WTC11 (cell line): ENCODE measurements at regions of chr13 and their contacts with region 1.

Region 1: GRCh38 chr13:27960362-27961226 is 8.5 kb downstream of the CDX2 start:
- DNase-seq: peak; percentile 89
- ATAC-seq: peak; percentile 76
- H3K4me3 Mint-ChIP-seq: peak overlapping the region; percentile 56
- H3K27ac Mint-ChIP-seq: no peak overlapping the region
- H3K4me1 Mint-ChIP-seq: peaks cover 37% of the 10 kb centered on the region
- H3K27me3 Mint-ChIP-seq: peaks cover 100% of the 10 kb centered on the region
- CTCF ChIP-seq: peak; percentile 55

Region 2: DNA sequence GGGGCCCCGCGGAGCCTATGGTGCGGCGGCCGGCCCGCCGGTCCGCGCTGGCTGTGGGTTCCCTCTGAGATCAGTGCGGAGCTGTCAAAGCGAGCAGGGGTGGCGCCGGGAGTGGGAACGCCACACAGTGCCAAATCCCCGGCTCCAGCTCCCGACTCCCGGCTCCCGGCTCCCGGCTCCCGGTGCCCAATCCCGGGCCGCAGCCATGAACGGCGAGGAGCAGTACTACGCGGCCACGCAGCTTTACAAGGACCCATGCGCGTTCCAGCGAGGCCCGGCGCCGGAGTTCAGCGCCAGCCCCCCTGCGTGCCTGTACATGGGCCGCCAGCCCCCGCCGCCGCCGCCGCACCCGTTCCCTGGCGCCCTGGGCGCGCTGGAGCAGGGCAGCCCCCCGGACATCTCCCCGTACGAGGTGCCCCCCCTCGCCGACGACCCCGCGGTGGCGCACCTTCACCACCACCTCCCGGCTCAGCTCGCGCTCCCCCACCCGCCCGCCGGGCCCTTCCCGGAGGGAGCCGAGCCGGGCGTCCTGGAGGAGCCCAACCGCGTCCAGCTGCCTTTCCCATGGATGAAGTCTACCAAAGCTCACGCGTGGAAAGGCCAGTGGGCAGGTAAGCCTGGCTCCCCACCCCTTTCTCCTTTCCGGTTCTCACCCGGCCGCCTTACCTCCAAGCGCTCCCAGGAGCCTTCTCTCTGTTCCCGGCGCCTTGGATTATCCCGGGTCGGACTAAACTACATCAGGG is 40.5 kb before region 1 on chr13 and contains the start of gene PDX1:
- CTCF ChIA-PET with region 1: interaction called, 10 read pairs
- POLR2A ChIA-PET with region 1: interaction called, 3 read pairs
- DNase-seq: peak; percentile 77
- ATAC-seq: peak; percentile 73
- H3K4me3 Mint-ChIP-seq: peak within 1 kb of the TSS; percentile 61
- H3K27ac Mint-ChIP-seq: no peak within 1 kb of the TSS
- H3K4me1 Mint-ChIP-seq: peaks cover 53% of the 10 kb centered on the region
- H3K27me3 Mint-ChIP-seq: peaks cover 99% of the 10 kb centered on the region
- CTCF ChIP-seq: no peak
- total RNA-seq, gene PDX1: not detected in 3 replicates

Region 3: DNA sequence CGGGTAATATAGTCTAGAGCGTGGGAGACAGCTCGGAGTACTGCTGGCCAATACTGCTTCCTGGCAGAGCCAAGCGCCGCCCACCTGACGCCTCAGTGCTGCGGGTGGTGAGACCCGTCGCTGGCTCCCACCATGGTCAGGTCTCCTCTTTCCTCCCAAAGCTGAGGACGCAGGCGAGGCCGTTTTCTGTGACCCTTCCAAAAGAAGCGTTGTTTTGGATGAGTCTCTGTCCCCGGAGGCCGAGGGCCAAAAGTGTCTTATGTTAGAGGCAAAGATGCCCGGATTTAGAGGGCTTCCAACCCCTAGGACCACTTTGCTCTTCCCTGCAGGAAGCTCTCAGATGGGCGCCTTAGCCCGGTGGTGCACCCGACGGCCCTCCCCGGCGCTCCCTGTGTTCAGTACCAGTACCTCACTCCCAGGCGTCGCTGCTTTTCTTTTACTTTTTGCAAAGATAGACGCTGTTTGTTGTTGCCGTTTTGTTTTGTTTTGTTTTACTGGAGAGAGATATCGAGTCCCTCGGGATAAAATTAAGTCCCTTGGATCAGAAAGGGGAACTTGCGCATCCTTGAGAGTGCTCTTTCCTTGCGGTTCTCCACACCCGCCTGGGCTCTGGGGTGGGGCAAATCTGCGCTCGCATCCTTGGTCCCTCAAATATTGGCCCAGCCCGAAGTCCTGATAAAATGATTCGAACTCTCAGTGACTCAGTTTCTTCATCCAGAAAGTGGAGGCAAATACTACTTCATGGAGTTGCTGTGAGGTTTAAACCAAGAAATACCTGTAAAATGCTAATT is 33.8 kb before region 1 on chr13:
- CTCF ChIA-PET with region 1: interaction called, 17 read pairs
- POLR2A ChIA-PET with region 1: interaction called, 3 read pairs
- DNase-seq: peak; percentile 47
- ATAC-seq: no peak
- H3K4me3 Mint-ChIP-seq: no peak overlapping the region
- H3K27ac Mint-ChIP-seq: no peak overlapping the region
- H3K4me1 Mint-ChIP-seq: peaks cover 52% of the 10 kb centered on the region
- H3K27me3 Mint-ChIP-seq: peaks cover 100% of the 10 kb centered on the region
- CTCF ChIP-seq: no peak

Region 4: DNA sequence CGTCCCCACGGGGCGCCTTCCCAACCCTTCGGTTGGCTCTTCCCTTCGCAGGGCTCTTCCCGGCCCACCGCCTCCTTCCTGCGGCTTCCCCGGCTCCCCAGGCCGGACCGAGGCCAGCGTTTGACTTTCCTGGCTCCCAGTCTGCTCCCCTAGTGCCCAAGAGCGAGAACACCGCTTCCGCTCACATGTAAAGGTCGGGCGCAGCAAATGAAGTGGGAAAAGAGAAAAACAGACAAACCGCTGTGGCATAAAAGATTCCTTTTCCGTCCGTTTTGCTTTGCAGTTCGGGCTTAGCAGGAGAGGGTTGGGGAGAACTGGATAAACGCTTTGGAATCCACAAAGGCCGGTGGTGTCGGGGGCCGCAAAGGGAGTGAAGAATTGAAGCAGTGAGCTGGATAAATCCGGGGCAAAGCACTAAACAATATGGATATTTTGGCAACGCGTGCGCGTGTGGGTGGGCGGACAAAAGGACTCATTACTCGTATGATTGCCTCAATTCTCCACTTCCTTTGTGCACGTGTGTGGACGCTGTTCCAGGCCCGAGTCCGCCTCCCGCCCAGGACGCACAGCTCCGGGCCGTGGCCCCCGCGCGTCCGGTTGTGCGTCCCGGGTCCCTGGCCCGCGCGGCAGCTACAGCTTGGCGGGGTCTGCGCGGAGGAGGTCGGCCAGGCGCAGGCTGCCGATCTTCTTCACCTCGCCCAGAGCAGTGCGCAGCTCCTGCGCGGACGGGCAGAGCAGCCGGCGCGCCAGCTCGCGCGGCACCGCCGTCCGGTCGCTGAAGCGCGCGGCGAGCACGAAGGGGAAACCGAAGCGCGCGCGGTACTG is 17.1 kb after region 1 on chr13:
- CTCF ChIA-PET with region 1: interaction called, 19 read pairs
- POLR2A ChIA-PET with region 1: interaction called, 3 read pairs
- DNase-seq: peak; percentile 69
- ATAC-seq: peak; percentile 31
- H3K4me3 Mint-ChIP-seq: peak overlapping the region; percentile 61
- H3K27ac Mint-ChIP-seq: no peak overlapping the region
- H3K4me1 Mint-ChIP-seq: peaks cover 46% of the 10 kb centered on the region
- H3K27me3 Mint-ChIP-seq: peaks cover 100% of the 10 kb centered on the region
- CTCF ChIP-seq: no peak